Panc1 (cell line): ENCODE measurements at regions of chr2 and their contacts with region 1.

Region 1: GRCh38 chr2:223108351-223109050 is 56.5 kb downstream of the KCNE4 start:
- DNase-seq: no peak
- ATAC-seq: no peak
- H3K4me3 ChIP-seq: no peak overlapping the region
- H3K27ac ChIP-seq: no peak overlapping the region
- H3K4me1 ChIP-seq: no peaks in the 10 kb centered on the region
- H3K27me3 ChIP-seq: no peaks in the 10 kb centered on the region
- CTCF ChIP-seq: no peak

Region 2: GRCh38 chr2:222959336-222959735 is 149.2 kb before region 1 on chr2:
- CTCF ChIA-PET with region 1: no interaction called
- POLR2A ChIA-PET with region 1: interaction called, 14 read pairs
- in situ Hi-C with region 1: no loop called
- intact Hi-C with region 1: no loop called
- DNase-seq: no peak
- ATAC-seq: peak; percentile 94
- H3K4me3 ChIP-seq: no peak overlapping the region
- H3K27ac ChIP-seq: no peak overlapping the region
- H3K4me1 ChIP-seq: 0 out of 2 replicates have a peak, but pooled peaks cover 4% of the 10 kb centered on the region
- H3K27me3 ChIP-seq: no peaks in the 10 kb centered on the region
- CTCF ChIP-seq: 0 out of 2 replicates have a peak, but pooled peaks have one; percentile 19

Region 3: DNA sequence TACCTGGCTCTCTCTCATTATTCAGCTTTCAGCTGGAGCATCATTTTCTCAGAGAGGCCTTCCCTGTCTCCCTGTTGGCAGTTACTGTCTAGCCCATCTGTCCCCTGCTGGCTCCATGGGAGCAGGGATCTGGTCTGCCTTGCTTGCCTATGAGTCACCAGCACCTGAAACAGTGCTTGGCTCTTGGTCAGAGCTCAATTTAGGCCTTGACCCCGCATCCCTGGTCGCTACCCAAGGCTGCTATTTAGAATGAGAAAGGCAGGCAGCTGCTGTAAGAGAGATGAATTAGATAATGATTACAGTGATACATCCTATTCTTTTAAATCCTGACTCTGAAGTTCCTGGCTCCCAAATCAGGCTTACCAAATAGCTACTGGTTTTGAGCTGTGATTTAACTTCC is 23.6 kb before region 1 on chr2:
- CTCF ChIA-PET with region 1: no interaction called
- POLR2A ChIA-PET with region 1: interaction called, 11 read pairs
- in situ Hi-C with region 1: no loop called
- intact Hi-C with region 1: no loop called
- DNase-seq: no peak
- ATAC-seq: no peak
- H3K4me3 ChIP-seq: no peak overlapping the region
- H3K27ac ChIP-seq: no peak overlapping the region
- H3K4me1 ChIP-seq: no peaks in the 10 kb centered on the region
- H3K27me3 ChIP-seq: no peaks in the 10 kb centered on the region
- CTCF ChIP-seq: no peak